ENCODE measurements at regions of chr6 and their contacts with region 1.

Region 1: GRCh38 chr6:119126826-119127225 is 48.4 kb upstream of the FAM184A start:
- DNase-seq: no peak
- H3K4me3 ChIP-seq: no peak overlapping the region
- H3K27ac ChIP-seq: no peak overlapping the region
- H3K4me1 ChIP-seq: no peaks in the 10 kb centered on the region
- H3K27me3 ChIP-seq: no peaks in the 10 kb centered on the region

Region 2: GRCh38 chr6:119138906-119139541 is 12.2 kb after region 1 on chr6:
- CTCF ChIA-PET with region 1: interaction called, 12 read pairs
- POLR2A ChIA-PET with region 1: interaction called, 3 read pairs
- DNase-seq: no peak
- H3K4me3 ChIP-seq: no peak overlapping the region
- H3K27ac ChIP-seq: peak overlapping the region in 1 of 2 experiments; percentile 64
- H3K4me1 ChIP-seq: peaks cover 2 to 32% (median 15%) of the 10 kb centered on the region in 4 experiments
- H3K27me3 ChIP-seq: no peaks in the 10 kb centered on the region

Measured in common myeloid progenitor, CD34-positive (primary cell).